ENCODE measurements at regions of chr17 and their contacts with region 1.

Region 1: GRCh38 chr17:17774009-17774881 is 62.5 kb downstream of the SREBF1 start:
- DNase-seq: peak; percentile 58
- H3K4me3 ChIP-seq: no peak overlapping the region
- H3K27ac ChIP-seq: peak overlapping the region; percentile 4
- H3K4me1 ChIP-seq: peaks cover 5% of the 10 kb centered on the region
- H3K27me3 ChIP-seq: no peaks in the 10 kb centered on the region
- CTCF ChIP-seq: peak in 1 of 2 donors; percentile 29
- POLR2A ChIP-seq: no peak

Region 2: GRCh38 chr17:17708295-17708694 is 66.0 kb before region 1 on chr17:
- CTCF ChIA-PET with region 1: no interaction called
- POLR2A ChIA-PET with region 1: no interaction called
- dilution Hi-C with region 1: no loop called
- intact Hi-C with region 1: no loop called
- DNase-seq: no peak
- H3K4me3 ChIP-seq: no peak overlapping the region
- H3K27ac ChIP-seq: no peak overlapping the region
- H3K4me1 ChIP-seq: peaks cover 26% of the 10 kb centered on the region
- H3K27me3 ChIP-seq: no peaks in the 10 kb centered on the region
- CTCF ChIP-seq: no peak
- POLR2A ChIP-seq: no peak

Region 3: GRCh38 chr17:17763136-17763535 is 11.1 kb before region 1 on chr17:
- CTCF ChIA-PET with region 1: interaction called, 15 read pairs
- POLR2A ChIA-PET with region 1: no interaction called
- dilution Hi-C with region 1: no loop called
- intact Hi-C with region 1: no loop called
- DNase-seq: no peak
- H3K4me3 ChIP-seq: no peak overlapping the region
- H3K27ac ChIP-seq: no peak overlapping the region
- H3K4me1 ChIP-seq: no peaks in the 10 kb centered on the region
- H3K27me3 ChIP-seq: no peaks in the 10 kb centered on the region
- CTCF ChIP-seq: no peak
- POLR2A ChIP-seq: no peak

Measured in endothelial cell of umbilical vein (primary cell).